ENCODE measurements at regions of chr18 and their contacts with region 1.

Region 1: GRCh38 chr18:10851824-10852319 is 297.5 kb downstream of the PIEZO2 start:
- DNase-seq: no peak
- H3K4me3 Mint-ChIP-seq: no peak overlapping the region
- H3K27ac Mint-ChIP-seq: no peak overlapping the region
- H3K4me1 Mint-ChIP-seq: no peaks in the 10 kb centered on the region
- H3K27me3 Mint-ChIP-seq: peaks cover 2% of the 10 kb centered on the region

Region 2: GRCh38 chr18:11040823-11041656 is 189.2 kb after region 1 on chr18:
- CTCF ChIA-PET with region 1: interaction called, 20 read pairs
- intact Hi-C with region 1: loop called (anchors 1 kb)
- DNase-seq: peak; percentile 30
- H3K4me3 Mint-ChIP-seq: no peak overlapping the region
- H3K27ac Mint-ChIP-seq: no peak overlapping the region
- H3K4me1 Mint-ChIP-seq: no peaks in the 10 kb centered on the region
- H3K27me3 Mint-ChIP-seq: peaks cover 16% of the 10 kb centered on the region

Region 3: GRCh38 chr18:11089931-11090715 is 238.3 kb after region 1 on chr18:
- CTCF ChIA-PET with region 1: no interaction called
- intact Hi-C with region 1: no loop called
- DNase-seq: no peak
- H3K4me3 Mint-ChIP-seq: no peak overlapping the region
- H3K27ac Mint-ChIP-seq: no peak overlapping the region
- H3K4me1 Mint-ChIP-seq: no peaks in the 10 kb centered on the region
- H3K27me3 Mint-ChIP-seq: peaks cover 13% of the 10 kb centered on the region

Region 4: DNA sequence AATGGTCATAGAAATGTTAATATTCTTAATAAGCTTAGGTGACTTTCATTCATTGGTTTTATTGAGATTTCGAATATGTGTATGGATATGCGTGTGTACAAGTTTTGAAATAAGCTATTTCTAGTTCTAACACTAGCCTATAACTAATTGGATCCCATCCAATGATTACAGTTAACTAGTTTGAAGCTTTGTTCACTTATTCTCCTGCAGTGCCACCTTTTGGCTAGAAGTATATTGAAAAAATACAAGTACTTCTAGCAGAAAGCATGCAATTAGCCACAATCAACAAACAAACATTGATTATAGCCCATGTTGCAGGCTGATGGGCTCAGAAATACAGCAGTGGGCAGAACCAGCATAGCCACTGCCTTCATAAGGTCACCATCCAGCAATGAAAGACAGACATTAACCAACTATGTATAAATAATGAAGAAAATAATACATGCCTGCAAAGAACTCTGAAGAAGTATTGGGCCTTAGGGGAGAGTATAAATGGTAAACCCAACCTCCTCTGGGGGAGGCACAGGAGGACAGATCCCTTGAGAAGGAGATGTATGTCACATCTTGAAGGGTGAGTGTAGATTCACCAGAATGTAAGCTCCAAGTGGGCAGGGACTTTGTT is 302.6 kb after region 1 on chr18:
- CTCF ChIA-PET with region 1: no interaction called
- intact Hi-C with region 1: loop called (anchors 1 kb)
- DNase-seq: no peak
- H3K4me3 Mint-ChIP-seq: no peak overlapping the region
- H3K27ac Mint-ChIP-seq: no peak overlapping the region
- H3K4me1 Mint-ChIP-seq: no peaks in the 10 kb centered on the region
- H3K27me3 Mint-ChIP-seq: peaks cover 26% of the 10 kb centered on the region

Region 5: GRCh38 chr18:11518788-11519685 is 667.2 kb after region 1 on chr18:
- CTCF ChIA-PET with region 1: no interaction called
- intact Hi-C with region 1: loop called (anchors 2 kb)
- DNase-seq: peak; percentile 69
- H3K4me3 Mint-ChIP-seq: no peak overlapping the region
- H3K27ac Mint-ChIP-seq: no peak overlapping the region
- H3K4me1 Mint-ChIP-seq: no peaks in the 10 kb centered on the region
- H3K27me3 Mint-ChIP-seq: peaks cover 4% of the 10 kb centered on the region

Region 6: DNA sequence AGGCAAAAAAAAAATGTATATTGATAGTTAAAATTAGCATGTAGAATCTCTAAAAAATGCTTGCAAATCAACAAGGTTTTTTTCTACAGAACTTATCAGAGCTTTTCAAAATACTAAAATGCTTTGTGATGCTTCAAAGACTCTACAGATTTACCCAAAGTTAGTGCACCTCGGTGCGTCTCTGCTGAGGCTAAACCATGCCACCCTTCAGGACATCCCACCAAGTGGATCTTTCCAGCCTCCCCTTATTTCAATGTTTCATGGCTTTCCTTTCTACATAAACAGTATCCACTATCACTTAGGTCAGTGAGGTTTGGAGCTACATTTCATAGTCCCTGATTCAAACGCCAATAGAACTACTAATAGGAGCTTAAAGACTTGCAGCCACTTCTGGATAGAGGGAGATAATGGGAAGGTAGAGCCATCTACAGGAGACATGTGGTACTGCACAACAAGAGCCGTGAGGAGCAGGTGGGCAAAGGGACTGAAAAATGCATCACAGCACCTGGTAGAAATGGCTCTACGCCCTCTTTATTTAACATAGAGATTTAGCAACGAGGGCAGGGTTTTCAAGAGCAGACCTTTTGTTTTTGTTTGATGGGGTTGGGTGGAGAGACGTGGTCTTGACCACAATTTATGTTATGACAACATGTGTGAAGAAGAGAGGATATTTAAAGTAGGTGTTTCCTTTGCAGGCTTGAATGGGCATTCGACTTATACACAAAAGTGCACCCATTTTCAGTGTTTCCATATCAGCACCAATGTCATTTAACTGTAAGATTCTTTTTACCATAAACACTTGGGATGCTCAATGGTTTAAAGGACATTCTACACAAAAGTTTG is 701.4 kb after region 1 on chr18:
- CTCF ChIA-PET with region 1: interaction called, 9 read pairs
- intact Hi-C with region 1: loop called (anchors 1 kb)
- DNase-seq: peak; percentile 53
- H3K4me3 Mint-ChIP-seq: no peak overlapping the region
- H3K27ac Mint-ChIP-seq: no peak overlapping the region
- H3K4me1 Mint-ChIP-seq: no peaks in the 10 kb centered on the region
- H3K27me3 Mint-ChIP-seq: peaks cover 4% of the 10 kb centered on the region

Region 7: GRCh38 chr18:12038639-12039417 is 1187.0 kb after region 1 on chr18:
- CTCF ChIA-PET with region 1: no interaction called
- intact Hi-C with region 1: loop called (anchors 10 kb)
- DNase-seq: peak; percentile 76
- H3K4me3 Mint-ChIP-seq: peak overlapping the region; percentile 48
- H3K27ac Mint-ChIP-seq: no peak overlapping the region
- H3K4me1 Mint-ChIP-seq: peaks cover 10% of the 10 kb centered on the region
- H3K27me3 Mint-ChIP-seq: peaks cover 5% of the 10 kb centered on the region